ENCODE measurements at regions of chr15 and their contacts with region 1.

Region 1: GRCh38 chr15:99123706-99124451 is 19.0 kb downstream of the SYNM start:
- DNase-seq: peak; percentile 93 to 95
- ATAC-seq: peak; percentile 93
- H3K4me3 ChIP-seq: no peak overlapping the region
- H3K27ac ChIP-seq: peak overlapping the region; percentile 84 to 100
- H3K4me1 ChIP-seq: no peaks in the 10 kb centered on the region
- H3K27me3 ChIP-seq: no peaks in the 10 kb centered on the region

Region 2: DNA sequence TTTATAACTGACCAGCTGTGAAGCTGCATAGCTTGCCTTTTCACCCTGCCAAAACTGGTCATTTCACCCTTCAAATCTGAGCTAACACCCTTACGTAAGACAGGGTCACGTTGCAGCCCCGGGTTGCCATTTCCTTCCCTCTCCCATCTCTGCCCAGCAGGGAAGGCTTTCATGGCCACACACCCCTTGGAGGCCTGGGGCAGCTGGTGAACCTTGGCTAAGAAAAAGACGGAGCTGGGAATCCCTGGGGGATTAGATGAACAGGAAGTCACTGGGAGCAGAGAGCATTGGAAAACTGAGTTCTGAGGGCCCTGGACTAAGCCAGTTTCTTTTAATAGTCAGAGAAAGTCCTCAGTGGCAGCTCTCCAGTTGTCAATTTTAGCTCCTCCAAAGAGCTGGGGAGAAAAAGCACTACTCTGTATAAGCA is 57.7 kb after region 1 on chr15:
- intact Hi-C with region 1: loop called in 1 of 2 experiments (anchors 2 kb)
- DNase-seq: peak in 1 of 2 donors; percentile 80
- ATAC-seq: peak; percentile 86
- H3K4me3 ChIP-seq: no peak overlapping the region
- H3K27ac ChIP-seq: peak overlapping the region; percentile 16 to 91
- H3K4me1 ChIP-seq: no peaks in the 10 kb centered on the region
- H3K27me3 ChIP-seq: no peaks in the 10 kb centered on the region

Region 3: DNA sequence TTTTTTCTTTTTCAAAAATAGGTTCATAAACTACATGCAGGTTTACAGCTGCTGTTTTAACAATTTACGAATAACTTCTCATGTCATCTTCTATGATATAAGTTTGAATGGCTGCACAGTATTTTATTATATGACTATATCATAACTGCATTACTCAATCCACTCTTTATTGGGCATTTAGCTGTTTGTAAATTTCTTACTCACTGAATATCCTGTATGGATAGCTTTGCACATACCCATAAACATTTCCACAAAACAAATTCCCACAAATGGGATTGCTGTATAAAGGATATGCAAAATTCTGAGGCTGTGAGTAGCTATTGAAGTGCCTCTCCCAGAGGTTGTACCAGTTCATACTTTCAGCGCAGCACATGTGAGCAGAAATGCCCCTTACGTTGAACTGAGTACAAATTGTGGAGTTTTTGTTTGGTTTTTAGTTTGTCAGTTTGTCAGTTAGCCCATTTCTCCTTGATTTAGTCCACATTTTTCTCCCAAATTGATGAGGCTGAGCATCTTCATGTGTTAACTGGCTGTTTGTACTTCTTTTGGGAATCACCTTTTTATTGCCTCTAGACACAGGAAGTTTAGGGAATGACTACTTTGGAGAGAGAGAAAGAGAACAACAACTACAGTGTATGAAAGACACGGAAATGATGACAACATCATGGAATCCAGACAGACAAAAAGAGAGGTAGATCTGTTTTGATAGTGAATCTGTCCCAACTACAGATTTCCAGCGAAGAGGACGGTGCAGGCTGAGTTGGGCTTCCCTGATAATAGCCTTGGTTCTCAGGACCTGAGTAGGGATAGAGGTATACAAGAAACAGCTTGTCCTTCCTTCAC is 100.7 kb after region 1 on chr15:
- intact Hi-C with region 1: no loop called
- DNase-seq: no peak
- ATAC-seq: no peak
- H3K4me3 ChIP-seq: no peak overlapping the region
- H3K27ac ChIP-seq: no peak overlapping the region
- H3K4me1 ChIP-seq: no peaks in the 10 kb centered on the region
- H3K27me3 ChIP-seq: no peaks in the 10 kb centered on the region

Measured in aorta (tissue), 5 donors.